ENCODE measurements at regions of chr15 and their contacts with region 1.

Region 1: GRCh38 chr15:85840065-85840801 is 45.5 kb upstream of the KLHL25 start:
- DNase-seq: no peak
- H3K4me3 ChIP-seq: peak overlapping the region; percentile 59
- H3K27ac ChIP-seq: no peak overlapping the region
- H3K27me3 ChIP-seq: peaks cover 6% of the 10 kb centered on the region
- CTCF ChIP-seq: peak; percentile 87

Region 2: GRCh38 chr15:85380217-85380811 is 459.9 kb before region 1 on chr15 and contains the start of gene AKAP13:
- CTCF ChIA-PET with region 1: no interaction called
- POLR2A ChIA-PET with region 1: no interaction called
- DNase-seq: peak; percentile 99
- H3K4me3 ChIP-seq: peak within 1 kb of the TSS; percentile 70
- H3K27ac ChIP-seq: peak within 1 kb of the TSS; percentile 80
- H3K27me3 ChIP-seq: no peaks in the 10 kb centered on the region
- CTCF ChIP-seq: no peak
- polyA plus RNA-seq, gene AKAP13: 15.5 and 21.9 TPM in 2 replicates

Region 3: GRCh38 chr15:85485956-85486567 is 354.2 kb before region 1 on chr15:
- CTCF ChIA-PET with region 1: interaction called, 10 read pairs
- POLR2A ChIA-PET with region 1: no interaction called
- DNase-seq: peak; percentile 58
- H3K4me3 ChIP-seq: no peak overlapping the region
- H3K27ac ChIP-seq: no peak overlapping the region
- H3K27me3 ChIP-seq: no peaks in the 10 kb centered on the region
- CTCF ChIP-seq: peak; percentile 80

Region 4: DNA sequence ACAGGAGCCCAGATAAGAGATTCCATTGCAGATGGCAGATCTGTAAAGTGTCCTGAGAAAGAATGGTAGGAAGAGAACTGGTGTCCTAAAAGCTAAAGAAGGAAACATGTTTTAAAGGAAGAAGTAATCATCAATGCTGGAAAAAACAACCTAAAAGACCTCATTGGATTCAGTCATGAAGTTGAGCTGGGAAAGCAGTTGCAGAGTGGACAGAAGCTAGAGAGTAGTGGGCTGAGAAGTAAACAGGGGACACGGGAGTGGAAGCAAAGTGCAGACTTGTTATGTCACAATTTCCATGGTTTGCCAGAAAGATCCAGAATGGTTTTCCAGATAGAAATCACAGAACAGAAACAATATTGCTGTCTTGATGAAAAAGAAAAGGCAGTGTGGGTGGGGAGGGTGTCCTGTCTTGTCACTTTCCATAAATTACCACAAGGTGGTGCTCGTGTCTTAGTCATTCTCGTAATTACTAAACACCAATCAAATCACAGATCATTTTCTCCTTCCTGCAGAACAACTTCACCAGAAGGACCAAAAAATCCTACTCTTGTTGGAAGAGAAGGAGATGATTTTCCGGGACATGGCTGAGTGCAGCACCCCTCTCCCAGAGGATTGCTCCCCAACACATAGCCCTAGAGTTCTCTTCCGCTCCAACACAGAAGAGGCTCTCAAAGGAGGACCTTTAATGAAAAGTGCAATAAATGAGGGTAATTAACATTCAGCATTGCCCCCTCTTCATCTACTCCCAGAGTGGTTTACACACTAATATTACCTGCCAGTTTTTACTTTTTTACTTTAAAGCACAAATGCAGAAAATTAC is 110.0 kb before region 1 on chr15:
- CTCF ChIA-PET with region 1: interaction called, 78 read pairs
- POLR2A ChIA-PET with region 1: no interaction called
- DNase-seq: peak; percentile 37
- H3K4me3 ChIP-seq: no peak overlapping the region
- H3K27ac ChIP-seq: no peak overlapping the region
- H3K27me3 ChIP-seq: no peaks in the 10 kb centered on the region
- CTCF ChIP-seq: peak; percentile 69

Region 5: DNA sequence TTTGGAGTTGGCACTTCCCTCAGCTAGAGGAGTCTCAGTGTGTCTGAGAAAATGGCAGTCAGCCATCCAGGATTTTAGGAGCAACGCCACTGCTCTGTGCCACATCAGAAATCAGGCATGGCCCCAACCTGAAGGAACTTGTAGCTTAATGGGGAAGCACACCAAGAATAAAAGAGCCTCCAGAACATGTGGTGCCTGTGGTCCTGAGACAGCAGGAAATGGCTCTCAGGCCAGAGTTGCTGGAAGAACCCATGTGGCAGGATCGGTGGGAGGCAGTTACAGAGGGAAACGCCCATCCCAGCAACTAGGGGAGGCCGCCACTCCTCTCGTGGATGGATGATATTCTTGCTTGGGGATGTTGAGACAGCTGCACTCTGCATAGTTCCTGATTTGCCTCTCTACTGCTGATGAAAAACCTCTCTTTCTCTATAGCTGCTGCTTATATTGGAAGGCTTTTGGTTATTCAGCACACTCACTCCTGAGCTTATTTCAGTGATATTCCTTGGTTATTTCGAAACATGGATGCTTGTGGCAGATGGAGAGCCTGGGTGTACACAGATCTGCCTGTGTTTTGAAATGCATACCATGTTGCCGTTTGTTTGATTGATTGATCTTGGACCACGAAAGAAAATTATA is 97.9 kb before region 1 on chr15:
- CTCF ChIA-PET with region 1: interaction called, 38 read pairs
- POLR2A ChIA-PET with region 1: no interaction called
- DNase-seq: no peak
- H3K4me3 ChIP-seq: no peak overlapping the region
- H3K27ac ChIP-seq: peak overlapping the region; percentile 2
- H3K27me3 ChIP-seq: no peaks in the 10 kb centered on the region
- CTCF ChIP-seq: no peak

Region 6: DNA sequence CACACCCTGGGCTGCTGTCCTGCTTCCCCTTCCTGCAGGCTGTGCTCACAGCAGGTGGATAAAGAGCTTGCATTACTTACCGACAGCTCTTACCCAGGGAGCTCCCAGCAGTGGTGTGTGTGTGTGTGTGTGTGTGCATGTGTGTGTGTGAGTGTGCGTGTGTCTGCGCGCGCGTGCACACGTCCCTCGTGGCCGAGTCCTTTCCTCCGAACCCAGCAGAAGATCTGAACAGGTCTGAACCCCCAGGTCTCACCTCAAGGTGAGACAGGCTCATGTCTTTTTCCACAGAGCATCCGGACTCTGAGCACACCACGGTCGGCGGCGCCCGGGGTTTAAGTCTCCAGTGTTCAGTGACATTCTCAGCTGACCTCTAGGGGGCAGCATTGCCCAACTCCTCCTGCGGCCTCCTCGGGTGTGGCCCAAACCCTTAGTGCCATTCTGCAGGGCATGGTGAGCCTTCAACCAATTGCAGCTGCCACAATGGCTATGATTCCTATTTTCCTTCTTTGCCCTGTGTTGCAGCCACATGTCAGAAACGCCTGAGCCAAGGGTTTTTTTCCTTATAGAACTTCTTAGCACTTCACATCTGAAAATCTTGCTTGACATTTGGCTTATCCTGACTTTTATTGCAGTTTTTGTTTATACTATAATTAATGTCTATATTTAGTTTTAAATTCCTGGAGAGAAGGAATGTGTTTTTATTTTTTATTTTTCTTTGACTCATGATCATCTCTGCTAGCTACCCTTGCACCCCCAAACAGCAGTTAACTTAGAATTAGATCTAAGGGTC is 18.5 kb after region 1 on chr15:
- CTCF ChIA-PET with region 1: interaction called, 18 read pairs
- POLR2A ChIA-PET with region 1: no interaction called
- DNase-seq: no peak
- H3K4me3 ChIP-seq: 0 out of 2 replicates have a peak overlapping the region, but pooled peaks have one; percentile 20
- H3K27ac ChIP-seq: no peak overlapping the region
- H3K27me3 ChIP-seq: peaks cover 6% of the 10 kb centered on the region
- CTCF ChIP-seq: peak; percentile 78

Measured in AG04450 (cell line).